ENCODE measurements at regions of chr3 and their contacts with region 1.

Region 1: DNA sequence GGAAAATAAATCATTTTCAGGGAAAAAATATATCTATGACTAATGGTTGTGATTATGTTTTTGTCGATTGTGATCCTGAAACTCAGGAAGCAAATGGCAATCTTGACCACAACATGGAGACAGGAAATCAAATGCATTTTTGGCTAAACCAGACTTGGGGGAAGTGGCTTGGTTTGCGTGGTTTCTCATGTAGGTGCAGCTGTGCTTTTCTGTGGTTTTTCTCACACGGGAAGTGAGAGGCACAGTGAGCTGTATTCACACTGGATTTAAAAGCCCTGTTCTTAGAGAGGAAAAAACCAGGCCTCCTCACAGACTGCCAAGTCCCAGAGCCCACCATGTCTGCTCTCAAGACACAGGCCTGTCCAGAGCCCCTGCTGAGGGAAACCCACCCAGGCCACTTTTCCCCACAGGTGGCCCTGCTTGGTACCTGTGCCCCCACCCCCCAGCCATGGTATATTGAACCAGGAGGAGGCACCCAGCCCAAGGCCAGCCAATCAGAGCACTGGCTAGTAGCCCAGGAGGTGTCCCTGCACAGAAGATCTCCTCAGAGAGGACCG is 46.1 kb downstream of the BTD start:
- DNase-seq: peak in 8 of 9 donors; percentile 46 to 79 (median 72)
- ATAC-seq: peak; percentile 92
- H3K4me3 ChIP-seq: peak overlapping the region; percentile 14
- H3K4me3 Mint-ChIP-seq: peak overlapping the region; percentile 58 to 85 (median 76)
- H3K27ac ChIP-seq: peak overlapping the region; percentile 15
- H3K27ac Mint-ChIP-seq: peak overlapping the region; percentile 6 to 75 (median 51)
- H3K4me1 ChIP-seq: peaks cover 38 to 44% of the 10 kb centered on the region in 2 donors
- H3K4me1 Mint-ChIP-seq: peaks cover 34 to 63% (median 57%) of the 10 kb centered on the region in 7 donors
- H3K27me3 ChIP-seq: no peaks in the 10 kb centered on the region
- H3K27me3 Mint-ChIP-seq: peaks cover 0 to 19% (median 11%) of the 10 kb centered on the region in 5 donors

Region 2: GRCh38 chr3:15610082-15610759 is 37.5 kb before region 1 on chr3:
- CTCF ChIA-PET with region 1: no interaction called
- POLR2A ChIA-PET with region 1: no interaction called
- intact Hi-C with region 1: no loop called
- DNase-seq: no peak
- ATAC-seq: no peak
- H3K4me3 ChIP-seq: no peak overlapping the region
- H3K4me3 Mint-ChIP-seq: no peak overlapping the region
- H3K27ac ChIP-seq: no peak overlapping the region
- H3K27ac Mint-ChIP-seq: no peak overlapping the region
- H3K4me1 ChIP-seq: no peaks in the 10 kb centered on the region
- H3K4me1 Mint-ChIP-seq: peaks cover 2 to 25% (median 11%) of the 10 kb centered on the region in 7 donors
- H3K27me3 ChIP-seq: no peaks in the 10 kb centered on the region
- H3K27me3 Mint-ChIP-seq: peaks cover 0 to 7% (median 0%) of the 10 kb centered on the region in 5 donors

Region 3: DNA sequence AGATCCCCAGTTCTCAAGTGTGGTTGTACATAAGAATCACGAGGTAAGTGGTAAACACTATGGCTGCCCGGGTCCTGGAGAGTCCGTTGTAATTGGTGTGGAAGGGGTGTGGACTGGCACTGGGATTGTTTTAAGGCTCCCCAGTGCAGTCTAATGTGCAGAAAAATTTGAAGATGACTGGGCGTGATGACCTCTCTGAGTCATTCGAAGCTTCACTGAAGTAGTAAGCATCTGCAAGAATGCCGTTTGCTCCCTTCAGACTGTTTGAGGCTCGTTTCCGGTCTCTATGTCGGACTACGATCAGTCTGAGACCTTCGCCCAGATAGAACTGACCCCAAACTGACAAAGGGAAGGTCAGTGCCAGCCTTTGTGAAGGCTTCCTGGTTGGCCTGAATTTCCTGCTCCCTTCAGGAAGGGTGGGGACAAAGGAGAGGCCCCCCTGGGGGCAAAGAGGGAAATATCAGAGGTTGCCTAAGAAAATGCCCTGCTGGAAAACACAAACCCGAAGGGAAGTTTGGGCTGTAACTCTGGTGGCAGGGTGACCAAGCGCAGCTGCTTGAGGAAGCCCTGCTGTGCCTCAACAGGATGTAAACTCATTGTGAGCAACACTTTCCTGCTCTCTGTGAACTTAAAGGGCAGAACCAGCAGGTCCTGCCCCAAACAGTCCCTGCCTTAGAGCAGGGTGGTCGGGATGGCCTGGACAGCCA is 11.5 kb before region 1 on chr3:
- CTCF ChIA-PET with region 1: interaction called, 3 read pairs
- POLR2A ChIA-PET with region 1: no interaction called
- intact Hi-C with region 1: loop called in 1 of 2 experiments (anchors 1 kb)
- DNase-seq: peak in 1 of 9 donors; percentile 43
- ATAC-seq: peak; percentile 84
- H3K4me3 ChIP-seq: peak overlapping the region; percentile 30
- H3K4me3 Mint-ChIP-seq: peak overlapping the region in 6 of 10 donors; percentile 6 to 61 (median 26)
- H3K27ac ChIP-seq: no peak overlapping the region
- H3K27ac Mint-ChIP-seq: peak overlapping the region in 3 of 9 donors; percentile 9 to 73 (median 64)
- H3K4me1 ChIP-seq: peaks cover 8 to 12% of the 10 kb centered on the region in 2 donors
- H3K4me1 Mint-ChIP-seq: peaks cover 19 to 45% (median 39%) of the 10 kb centered on the region in 7 donors
- H3K27me3 ChIP-seq: no peaks in the 10 kb centered on the region
- H3K27me3 Mint-ChIP-seq: no peaks in the 10 kb centered on the region

Region 4: DNA sequence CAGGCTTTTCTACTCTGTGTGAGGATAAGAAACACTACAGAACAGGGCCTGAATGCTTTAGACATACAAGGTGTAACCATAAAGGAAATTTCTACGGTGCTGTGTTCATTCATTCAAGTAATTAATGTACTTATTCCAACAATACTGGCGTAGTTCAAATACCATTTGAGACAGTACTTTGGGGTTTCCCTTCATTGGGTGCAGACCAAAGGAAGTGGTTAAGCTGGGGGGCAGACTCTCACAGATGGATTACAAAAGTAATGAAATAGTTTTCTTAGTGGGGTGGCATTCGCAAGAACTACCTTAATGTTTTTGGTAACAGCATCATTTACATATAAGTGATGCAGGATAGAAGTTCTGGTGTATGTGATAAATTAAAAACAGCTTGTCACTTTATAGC is 19.8 kb after region 1 on chr3:
- CTCF ChIA-PET with region 1: no interaction called
- POLR2A ChIA-PET with region 1: no interaction called
- intact Hi-C with region 1: loop called (anchors 1 to 2 kb)
- DNase-seq: peak in 7 of 9 donors; percentile 18 to 54 (median 28)
- ATAC-seq: peak; percentile 93
- H3K4me3 ChIP-seq: no peak overlapping the region
- H3K4me3 Mint-ChIP-seq: peak overlapping the region in 8 of 10 donors; percentile 13 to 37 (median 28)
- H3K27ac ChIP-seq: no peak overlapping the region
- H3K27ac Mint-ChIP-seq: peak overlapping the region in 2 of 9 donors; percentile 33 to 39
- H3K4me1 ChIP-seq: peaks cover 15 to 16% of the 10 kb centered on the region in 2 donors
- H3K4me1 Mint-ChIP-seq: peaks cover 6 to 33% (median 23%) of the 10 kb centered on the region in 7 donors
- H3K27me3 ChIP-seq: no peaks in the 10 kb centered on the region
- H3K27me3 Mint-ChIP-seq: no peaks in the 10 kb centered on the region

Region 5: GRCh38 chr3:15685927-15686326 is 38.2 kb after region 1 on chr3:
- CTCF ChIA-PET with region 1: no interaction called
- POLR2A ChIA-PET with region 1: interaction called, 3 read pairs
- intact Hi-C with region 1: loop called in 1 of 2 experiments (anchors 5 kb)
- DNase-seq: no peak
- ATAC-seq: peak; percentile 69
- H3K4me3 ChIP-seq: no peak overlapping the region
- H3K4me3 Mint-ChIP-seq: peak overlapping the region in 1 of 10 donors; percentile 17
- H3K27ac ChIP-seq: no peak overlapping the region
- H3K27ac Mint-ChIP-seq: no peak overlapping the region
- H3K4me1 ChIP-seq: no peaks in the 10 kb centered on the region
- H3K4me1 Mint-ChIP-seq: peaks cover 0 to 16% (median 5%) of the 10 kb centered on the region in 7 donors
- H3K27me3 ChIP-seq: no peaks in the 10 kb centered on the region
- H3K27me3 Mint-ChIP-seq: no peaks in the 10 kb centered on the region

Region 6: DNA sequence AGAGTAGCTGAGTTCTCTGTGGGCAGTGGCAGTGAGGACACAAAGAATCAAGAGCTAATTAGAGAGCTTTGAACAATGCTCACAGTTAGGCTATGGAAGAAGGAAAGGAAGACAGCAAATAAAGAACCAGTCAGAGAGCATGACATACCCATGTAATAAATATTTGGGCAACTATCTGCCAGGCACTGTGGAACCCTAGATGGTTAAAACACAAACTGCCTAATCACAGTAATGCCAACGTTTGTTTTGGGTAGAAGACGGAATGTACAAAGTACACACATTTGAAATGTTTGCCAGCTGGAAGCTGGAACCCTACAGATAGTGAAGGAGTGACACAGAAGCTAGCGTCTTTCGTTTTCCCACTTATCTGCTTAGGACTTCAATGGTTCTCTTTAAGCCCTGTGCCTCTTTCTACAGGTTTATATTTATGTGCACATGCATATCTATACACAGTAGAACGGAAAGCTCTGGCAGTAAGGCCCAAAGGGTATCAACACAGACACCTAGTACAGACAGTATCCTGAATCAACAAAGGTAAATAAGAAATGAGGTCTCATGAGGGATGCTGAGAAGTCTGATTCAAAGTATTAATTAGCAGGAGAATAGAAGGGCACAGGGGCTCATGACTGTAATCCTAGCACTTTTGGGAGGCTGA is 105.5 kb after region 1 on chr3:
- CTCF ChIA-PET with region 1: no interaction called
- POLR2A ChIA-PET with region 1: no interaction called
- intact Hi-C with region 1: loop called in 1 of 2 experiments (anchors 5 kb)
- DNase-seq: no peak
- ATAC-seq: no peak
- H3K4me3 ChIP-seq: no peak overlapping the region
- H3K4me3 Mint-ChIP-seq: no peak overlapping the region
- H3K27ac ChIP-seq: no peak overlapping the region
- H3K27ac Mint-ChIP-seq: peak overlapping the region in 1 of 9 donors; percentile 51
- H3K4me1 ChIP-seq: no peaks in the 10 kb centered on the region
- H3K4me1 Mint-ChIP-seq: peaks cover 2 to 20% (median 6%) of the 10 kb centered on the region in 7 donors
- H3K27me3 ChIP-seq: no peaks in the 10 kb centered on the region
- H3K27me3 Mint-ChIP-seq: no peaks in the 10 kb centered on the region

Region 7: GRCh38 chr3:15797642-15798303 is 150.1 kb after region 1 on chr3 and contains the start of gene ANKRD28:
- CTCF ChIA-PET with region 1: no interaction called
- POLR2A ChIA-PET with region 1: no interaction called
- intact Hi-C with region 1: loop called in 1 of 2 experiments (anchors 2 kb)
- DNase-seq: peak in 5 of 9 donors; percentile 8 to 29 (median 20)
- ATAC-seq: peak; percentile 67
- H3K4me3 ChIP-seq: peak within 1 kb of the TSS; percentile 0
- H3K4me3 Mint-ChIP-seq: peak within 1 kb of the TSS in 9 of 10 donors; percentile 28 to 96 (median 57)
- H3K27ac ChIP-seq: no peak within 1 kb of the TSS
- H3K27ac Mint-ChIP-seq: peak within 1 kb of the TSS in 8 of 9 donors; percentile 2 to 97 (median 50)
- H3K4me1 ChIP-seq: peaks cover 26 to 38% of the 10 kb centered on the region in 2 donors
- H3K4me1 Mint-ChIP-seq: peaks cover 42 to 84% (median 76%) of the 10 kb centered on the region in 7 donors
- H3K27me3 ChIP-seq: no peaks in the 10 kb centered on the region
- H3K27me3 Mint-ChIP-seq: no peaks in the 10 kb centered on the region
- total RNA-seq, gene ANKRD28: 27.4 to 70.4 (median 43.2) TPM

Region 8: DNA sequence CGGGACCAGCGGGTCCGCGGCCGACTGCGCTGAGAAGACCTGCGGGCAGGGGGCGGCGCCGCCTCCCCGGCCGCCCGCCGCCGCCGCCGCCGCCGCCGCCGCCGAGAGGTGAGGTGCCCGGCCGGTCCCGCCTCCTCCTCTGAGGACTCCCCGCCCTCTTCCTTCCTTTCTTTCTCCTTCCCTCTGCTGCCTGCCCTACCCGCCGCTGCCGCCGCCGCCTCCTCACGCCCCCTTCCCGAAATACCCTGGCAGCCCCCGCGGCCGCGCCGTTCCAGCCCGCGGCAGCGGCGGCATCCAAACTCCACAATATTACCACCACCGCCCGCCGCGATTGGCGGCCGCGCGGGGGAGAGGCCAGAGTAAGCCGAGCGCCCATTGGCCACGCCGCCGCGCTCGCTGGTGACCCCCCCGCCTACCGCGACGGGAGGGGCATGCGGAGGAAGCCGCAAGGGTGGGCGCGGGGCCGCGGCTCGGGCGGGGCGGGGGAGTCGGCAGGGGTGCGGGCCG is 211.9 kb after region 1 on chr3:
- CTCF ChIA-PET with region 1: no interaction called
- POLR2A ChIA-PET with region 1: no interaction called
- intact Hi-C with region 1: loop called in 1 of 2 experiments (anchors 5 kb)
- DNase-seq: peak; percentile 57 to 86 (median 71)
- ATAC-seq: peak; percentile 91
- H3K4me3 ChIP-seq: peak overlapping the region; percentile 63
- H3K4me3 Mint-ChIP-seq: peak overlapping the region; percentile 85 to 99 (median 95)
- H3K27ac ChIP-seq: peak overlapping the region; percentile 77
- H3K27ac Mint-ChIP-seq: peak overlapping the region in 6 of 9 donors; percentile 76 to 98 (median 92)
- H3K4me1 ChIP-seq: peaks cover 12 to 14% of the 10 kb centered on the region in 2 donors
- H3K4me1 Mint-ChIP-seq: peaks cover 21 to 50% (median 43%) of the 10 kb centered on the region in 7 donors
- H3K27me3 ChIP-seq: no peaks in the 10 kb centered on the region
- H3K27me3 Mint-ChIP-seq: peaks cover 0 to 10% (median 0%) of the 10 kb centered on the region in 5 donors

Region 9: DNA sequence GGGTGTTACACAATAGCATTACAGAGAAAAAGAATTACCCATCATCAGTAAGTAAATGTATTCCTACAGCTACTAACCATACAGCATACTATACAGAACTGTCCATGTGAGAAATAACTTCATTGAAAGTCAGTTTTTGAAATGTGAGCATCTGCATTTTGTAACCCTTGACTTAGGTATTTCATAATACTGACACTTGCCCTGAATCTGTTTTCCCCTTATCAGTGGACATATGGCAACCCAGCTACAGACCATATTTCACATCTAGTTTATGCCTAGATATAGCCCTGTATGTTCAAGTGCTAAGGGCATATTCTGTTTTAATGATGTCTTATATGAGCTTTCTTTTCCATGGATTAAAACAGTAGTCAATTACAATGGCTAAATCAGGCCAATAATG is 1797.2 kb after region 1 on chr3:
- CTCF ChIA-PET with region 1: no interaction called
- POLR2A ChIA-PET with region 1: no interaction called
- intact Hi-C with region 1: no loop called
- DNase-seq: no peak
- ATAC-seq: no peak
- H3K4me3 ChIP-seq: no peak overlapping the region
- H3K4me3 Mint-ChIP-seq: no peak overlapping the region
- H3K27ac ChIP-seq: no peak overlapping the region
- H3K27ac Mint-ChIP-seq: no peak overlapping the region
- H3K4me1 ChIP-seq: no peaks in the 10 kb centered on the region
- H3K4me1 Mint-ChIP-seq: peaks cover 0 to 4% (median 0%) of the 10 kb centered on the region in 7 donors
- H3K27me3 ChIP-seq: no peaks in the 10 kb centered on the region
- H3K27me3 Mint-ChIP-seq: no peaks in the 10 kb centered on the region

Measured in naive thymus-derived CD4-positive, alpha-beta T cell (primary cell).